Esophagus muscularis mucosa (tissue), 4 donors: ENCODE measurements at regions of chr13 and their contacts with region 1.

Region 1: GRCh38 chr13:94620286-94620896 is 18.7 kb downstream of the GPR180 start:
- DNase-seq: no peak
- H3K4me3 ChIP-seq: no peak overlapping the region
- H3K27ac ChIP-seq: no peak overlapping the region
- H3K4me1 ChIP-seq: no peaks in the 10 kb centered on the region
- H3K27me3 ChIP-seq: no peaks in the 10 kb centered on the region
- CTCF ChIP-seq: peak; percentile 25 to 50 (median 35)
- EP300 ChIP-seq: no peak
- POLR2A ChIP-seq: no peak

Region 2: DNA sequence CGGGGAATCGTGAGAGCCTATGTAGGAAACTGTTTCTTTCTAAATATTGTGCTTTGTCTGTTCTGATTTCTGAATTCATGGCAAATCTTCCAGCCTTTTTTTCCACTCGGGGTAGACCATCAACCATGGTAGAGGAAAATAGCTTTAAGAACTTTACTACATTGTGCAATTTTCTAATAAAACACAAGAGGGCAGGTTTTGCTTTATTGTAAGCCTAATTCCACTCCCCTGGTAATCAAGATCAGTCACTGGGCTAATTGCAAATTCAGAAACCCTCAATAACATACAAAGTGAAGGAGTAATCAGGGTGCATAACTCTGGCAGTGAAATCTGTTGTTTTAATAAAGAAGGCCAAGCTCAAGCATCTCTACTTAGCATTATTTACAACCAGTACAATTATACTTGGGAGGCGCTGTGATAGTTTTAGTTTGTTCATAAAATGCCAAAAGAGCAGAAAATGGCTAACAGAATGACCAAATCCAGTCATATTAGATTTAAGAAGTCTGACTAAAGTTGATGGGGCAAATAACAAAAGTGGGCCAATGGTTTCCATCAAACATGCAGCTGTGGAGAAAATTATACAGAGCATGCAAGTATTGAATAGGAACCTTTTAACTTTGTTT is 184.7 kb before region 1 on chr13:
- intact Hi-C with region 1: loop called (anchors 1 kb)
- DNase-seq: peak; percentile 14
- H3K4me3 ChIP-seq: no peak overlapping the region
- H3K27ac ChIP-seq: no peak overlapping the region
- H3K4me1 ChIP-seq: no peaks in the 10 kb centered on the region
- H3K27me3 ChIP-seq: no peaks in the 10 kb centered on the region
- CTCF ChIP-seq: peak; percentile 53 to 71 (median 61)
- EP300 ChIP-seq: no peak
- POLR2A ChIP-seq: no peak